Motor neuron (in vitro differentiated cells): ENCODE measurements at regions of chr14 and their contacts with region 1.

Region 1: GRCh38 chr14:78848234-78848820 is 678.2 kb downstream of the NRXN3 start:
- ATAC-seq: peak; percentile 51 to 84 (median 66)
- H3K4me3 ChIP-seq: no peak overlapping the region
- H3K27ac ChIP-seq: no peak overlapping the region
- H3K4me1 ChIP-seq: peaks cover 0 to 3% of the 10 kb centered on the region in 2 donors

Region 2: GRCh38 chr14:78605897-78606500 is 242.3 kb before region 1 on chr14:
- in situ Hi-C with region 1: loop called in 1 of 9 experiments (anchors 25 kb)
- ATAC-seq: peak in 3 of 8 experiments; percentile 45 to 89 (median 59)
- H3K4me3 ChIP-seq: no peak overlapping the region
- H3K27ac ChIP-seq: no peak overlapping the region
- H3K4me1 ChIP-seq: peaks cover 12 to 15% of the 10 kb centered on the region in 2 donors

Region 3: DNA sequence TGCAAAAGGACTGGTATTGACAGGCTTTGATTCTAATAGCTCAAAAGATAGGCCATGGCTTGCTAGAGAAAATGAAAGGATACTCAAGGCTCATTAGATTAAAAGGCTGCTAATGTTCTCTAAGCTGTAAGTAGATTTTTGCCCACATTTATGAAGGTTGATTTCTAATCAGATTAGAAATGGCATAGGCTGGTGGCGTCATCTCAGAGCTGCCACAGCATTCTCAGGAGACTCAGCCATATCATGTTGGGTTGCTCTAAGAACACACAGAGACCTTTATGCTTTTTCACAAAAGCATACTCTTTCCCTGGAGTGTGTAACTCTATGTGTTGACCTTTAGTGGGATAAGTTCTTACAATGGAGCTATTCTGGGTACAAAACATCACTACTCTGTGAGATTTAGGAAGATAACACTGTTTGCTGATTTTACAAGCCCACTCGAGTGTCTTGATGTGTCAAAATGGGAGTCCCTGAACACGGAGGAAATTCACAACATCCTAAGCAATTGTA is 102.2 kb before region 1 on chr14:
- in situ Hi-C with region 1: no loop called
- ATAC-seq: peak in 1 of 8 experiments; percentile 43
- H3K4me3 ChIP-seq: no peak overlapping the region
- H3K27ac ChIP-seq: no peak overlapping the region
- H3K4me1 ChIP-seq: peaks cover 3% of the 10 kb centered on the region in 2 donors

Region 4: GRCh38 chr14:78997811-78998210 is 149.5 kb after region 1 on chr14:
- in situ Hi-C with region 1: no loop called
- ATAC-seq: no peak
- H3K4me3 ChIP-seq: no peak overlapping the region
- H3K27ac ChIP-seq: no peak overlapping the region
- H3K4me1 ChIP-seq: peaks cover 0 to 6% of the 10 kb centered on the region in 2 donors